CD4-positive, alpha-beta memory T cell (primary cell): ENCODE measurements at regions of chr5 and their contacts with region 1.

Region 1: DNA sequence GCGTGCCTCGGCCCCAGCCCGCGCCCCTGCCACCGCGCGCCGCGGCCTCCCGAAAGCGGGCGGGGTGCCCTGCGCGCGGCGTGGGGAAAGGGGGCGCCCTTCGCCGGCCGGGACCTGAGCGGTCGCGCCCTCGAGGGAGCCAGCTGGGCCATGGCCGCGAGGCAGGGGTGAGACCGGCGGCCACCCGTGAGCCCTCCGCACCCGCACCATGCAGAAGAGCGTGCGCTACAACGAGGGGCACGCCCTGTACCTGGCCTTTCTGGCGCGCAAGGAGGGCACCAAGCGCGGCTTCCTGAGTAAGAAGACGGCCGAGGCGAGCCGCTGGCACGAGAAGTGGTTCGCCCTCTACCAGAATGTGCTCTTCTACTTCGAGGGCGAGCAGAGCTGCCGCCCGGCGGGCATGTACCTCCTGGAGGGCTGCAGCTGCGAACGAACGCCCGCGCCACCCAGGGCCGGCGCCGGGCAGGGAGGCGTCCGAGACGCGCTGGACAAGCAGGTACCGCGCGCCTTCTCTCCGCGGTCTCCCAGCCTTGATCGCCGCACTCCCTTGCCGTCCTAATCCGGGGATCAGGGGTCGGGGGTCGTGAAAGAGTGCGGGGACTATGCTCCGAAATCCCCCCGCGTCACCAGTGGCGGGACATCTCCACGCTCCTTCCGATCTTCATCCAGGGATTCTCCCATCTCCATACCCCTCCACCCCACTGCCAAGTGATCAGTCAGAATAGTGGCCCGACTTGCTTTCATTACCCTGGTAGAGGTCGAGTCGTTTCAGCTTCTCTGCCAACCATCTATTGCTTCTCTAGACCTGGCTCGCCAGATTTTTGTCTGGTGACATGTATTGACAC is 590 bp downstream of the RASGRF2 start:
- DNase-seq: peak; percentile 45 to 59 (median 55)
- H3K4me3 ChIP-seq: peak overlapping the region; percentile 84 to 85
- H3K4me3 Mint-ChIP-seq: peak overlapping the region; percentile 87 to 97 (median 94)
- H3K27ac ChIP-seq: peak overlapping the region; percentile 44
- H3K27ac Mint-ChIP-seq: peak overlapping the region; percentile 76 to 94 (median 82)
- H3K4me1 ChIP-seq: peaks cover 52% of the 10 kb centered on the region
- H3K4me1 Mint-ChIP-seq: peaks cover 40 to 64% (median 50%) of the 10 kb centered on the region in 4 donors
- H3K27me3 ChIP-seq: no peaks in the 10 kb centered on the region
- H3K27me3 Mint-ChIP-seq: no peaks in the 10 kb centered on the region

Region 2: GRCh38 chr5:81045389-81045807 is 84.6 kb after region 1 on chr5:
- CTCF ChIA-PET with region 1: interaction called, 5 read pairs
- POLR2A ChIA-PET with region 1: interaction called, 3 read pairs
- intact Hi-C with region 1: loop called (anchors 2 kb)
- DNase-seq: no peak
- H3K4me3 ChIP-seq: no peak overlapping the region
- H3K4me3 Mint-ChIP-seq: no peak overlapping the region
- H3K27ac ChIP-seq: no peak overlapping the region
- H3K27ac Mint-ChIP-seq: peak overlapping the region in 2 of 7 donors; percentile 29 to 47
- H3K4me1 ChIP-seq: no peaks in the 10 kb centered on the region
- H3K4me1 Mint-ChIP-seq: peaks cover 25 to 54% (median 36%) of the 10 kb centered on the region in 4 donors
- H3K27me3 ChIP-seq: no peaks in the 10 kb centered on the region
- H3K27me3 Mint-ChIP-seq: no peaks in the 10 kb centered on the region

Region 3: GRCh38 chr5:81194633-81195333 is 234.0 kb after region 1 on chr5:
- CTCF ChIA-PET with region 1: no interaction called
- POLR2A ChIA-PET with region 1: no interaction called
- intact Hi-C with region 1: no loop called
- DNase-seq: peak; percentile 68 to 77 (median 76)
- H3K4me3 ChIP-seq: no peak overlapping the region
- H3K4me3 Mint-ChIP-seq: peak overlapping the region in 7 of 8 donors; percentile 15 to 74 (median 48)
- H3K27ac ChIP-seq: no peak overlapping the region
- H3K27ac Mint-ChIP-seq: peak overlapping the region in 5 of 7 donors; percentile 64 to 87 (median 81)
- H3K4me1 ChIP-seq: peaks cover 8% of the 10 kb centered on the region
- H3K4me1 Mint-ChIP-seq: peaks cover 5 to 10% (median 8%) of the 10 kb centered on the region in 4 donors
- H3K27me3 ChIP-seq: no peaks in the 10 kb centered on the region
- H3K27me3 Mint-ChIP-seq: no peaks in the 10 kb centered on the region